ENCODE measurements at regions of chr9 and their contacts with region 1.

Region 1: GRCh38 chr9:7405924-7406604 is 393.5 kb downstream of the DMAC1 start:
- DNase-seq: no peak
- H3K4me3 Mint-ChIP-seq: no peak overlapping the region
- H3K27ac Mint-ChIP-seq: peak overlapping the region; percentile 40
- H3K4me1 Mint-ChIP-seq: peaks cover 42% of the 10 kb centered on the region
- H3K27me3 Mint-ChIP-seq: peaks cover 19% of the 10 kb centered on the region

Region 2: GRCh38 chr9:6894135-6894534 is 511.9 kb before region 1 on chr9:
- intact Hi-C with region 1: loop called (anchors 10 kb)
- DNase-seq: no peak
- H3K4me3 Mint-ChIP-seq: peak overlapping the region; percentile 19
- H3K27ac Mint-ChIP-seq: peak overlapping the region; percentile 74
- H3K4me1 Mint-ChIP-seq: peaks cover 51% of the 10 kb centered on the region
- H3K27me3 Mint-ChIP-seq: no peaks in the 10 kb centered on the region

Region 3: DNA sequence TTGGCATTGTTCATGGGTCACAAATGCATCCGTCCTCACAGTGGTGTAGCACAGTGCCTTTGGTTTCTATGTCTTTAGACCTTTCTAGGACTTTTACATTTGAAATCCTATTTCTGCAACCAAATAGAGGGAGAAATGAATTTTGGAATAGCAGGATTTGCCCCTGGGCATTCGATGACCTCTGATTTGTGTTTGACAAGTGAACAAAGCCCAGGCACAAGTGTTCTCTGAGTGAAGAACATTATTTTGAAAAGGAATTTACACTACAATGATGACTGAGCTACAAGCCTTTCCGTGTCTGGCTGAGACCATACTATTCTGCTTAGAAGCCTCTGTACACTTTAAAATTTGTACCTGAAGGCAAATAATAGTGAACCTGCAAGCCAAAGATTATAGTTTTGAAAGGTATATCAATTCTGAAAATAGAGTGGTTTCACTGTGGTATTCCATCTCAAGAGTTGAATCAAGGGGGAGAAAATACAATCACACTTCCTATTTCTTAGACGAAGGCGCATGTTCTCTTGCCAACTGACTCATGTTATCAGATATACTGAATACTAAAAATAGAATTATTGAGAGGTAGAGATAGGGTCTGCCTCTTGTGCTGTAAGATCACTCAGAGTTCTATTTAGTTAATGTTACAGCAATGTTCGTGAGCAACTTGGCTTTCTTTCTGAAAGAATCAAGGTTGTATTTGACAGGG is 350.7 kb before region 1 on chr9:
- intact Hi-C with region 1: loop called (anchors 5 kb)
- DNase-seq: no peak
- H3K4me3 Mint-ChIP-seq: no peak overlapping the region
- H3K27ac Mint-ChIP-seq: no peak overlapping the region
- H3K4me1 Mint-ChIP-seq: peaks cover 29% of the 10 kb centered on the region
- H3K27me3 Mint-ChIP-seq: no peaks in the 10 kb centered on the region

Region 4: GRCh38 chr9:7196467-7196866 is 209.6 kb before region 1 on chr9:
- intact Hi-C with region 1: no loop called
- DNase-seq: no peak
- H3K4me3 Mint-ChIP-seq: no peak overlapping the region
- H3K27ac Mint-ChIP-seq: no peak overlapping the region
- H3K4me1 Mint-ChIP-seq: peaks cover 5% of the 10 kb centered on the region
- H3K27me3 Mint-ChIP-seq: peaks cover 3% of the 10 kb centered on the region

Region 5: GRCh38 chr9:7536310-7536939 is 130.4 kb after region 1 on chr9:
- intact Hi-C with region 1: loop called (anchors 1 kb)
- DNase-seq: peak; percentile 29
- H3K4me3 Mint-ChIP-seq: no peak overlapping the region
- H3K27ac Mint-ChIP-seq: no peak overlapping the region
- H3K4me1 Mint-ChIP-seq: peaks cover 37% of the 10 kb centered on the region
- H3K27me3 Mint-ChIP-seq: peaks cover 10% of the 10 kb centered on the region

Region 6: GRCh38 chr9:8115570-8115969 is 709.5 kb after region 1 on chr9:
- intact Hi-C with region 1: loop called (anchors 1 kb)
- DNase-seq: peak; percentile 8
- H3K4me3 Mint-ChIP-seq: peak overlapping the region; percentile 35
- H3K27ac Mint-ChIP-seq: peak overlapping the region; percentile 88
- H3K4me1 Mint-ChIP-seq: peaks cover 27% of the 10 kb centered on the region
- H3K27me3 Mint-ChIP-seq: no peaks in the 10 kb centered on the region

Region 7: GRCh38 chr9:8365029-8365428 is 959.0 kb after region 1 on chr9:
- intact Hi-C with region 1: loop called (anchors 10 kb)
- DNase-seq: no peak
- H3K4me3 Mint-ChIP-seq: no peak overlapping the region
- H3K27ac Mint-ChIP-seq: peak overlapping the region; percentile 4
- H3K4me1 Mint-ChIP-seq: peaks cover 12% of the 10 kb centered on the region
- H3K27me3 Mint-ChIP-seq: no peaks in the 10 kb centered on the region